Ascending aorta (tissue), 2 donors: ENCODE measurements at regions of chr1 and their contacts with region 1.

Region 1: GRCh38 chr1:150979092-150980056 is 2.7 kb upstream of the ANXA9 start:
- DNase-seq: peak; percentile 42 to 96
- H3K4me3 ChIP-seq: peak overlapping the region in 1 of 2 donors; percentile 50
- H3K27ac ChIP-seq: peak overlapping the region; percentile 95 to 99
- H3K4me1 ChIP-seq: peaks cover 11 to 34% of the 10 kb centered on the region in 2 donors
- H3K27me3 ChIP-seq: no peaks in the 10 kb centered on the region
- CTCF ChIP-seq: peak; percentile 99

Region 2: GRCh38 chr1:150925816-150926741 is 53.3 kb before region 1 on chr1 and contains the start of gene SETDB1:
- intact Hi-C with region 1: loop called (anchors 5 kb)
- DNase-seq: peak; percentile 81 to 98
- H3K4me3 ChIP-seq: peak within 1 kb of the TSS; percentile 73 to 80
- H3K27ac ChIP-seq: peak within 1 kb of the TSS; percentile 71 to 84
- H3K4me1 ChIP-seq: peaks cover 0 to 4% of the 10 kb centered on the region in 2 donors
- H3K27me3 ChIP-seq: no peaks in the 10 kb centered on the region
- CTCF ChIP-seq: no peak
- total RNA-seq, gene SETDB1: 21.3 TPM

Region 3: GRCh38 chr1:150961799-150962198 is 17.6 kb before region 1 on chr1:
- intact Hi-C with region 1: no loop called
- DNase-seq: no peak
- H3K4me3 ChIP-seq: no peak overlapping the region
- H3K27ac ChIP-seq: peak overlapping the region in 1 of 2 donors; percentile 23
- H3K4me1 ChIP-seq: no peaks in the 10 kb centered on the region
- H3K27me3 ChIP-seq: no peaks in the 10 kb centered on the region
- CTCF ChIP-seq: no peak

Region 4: DNA sequence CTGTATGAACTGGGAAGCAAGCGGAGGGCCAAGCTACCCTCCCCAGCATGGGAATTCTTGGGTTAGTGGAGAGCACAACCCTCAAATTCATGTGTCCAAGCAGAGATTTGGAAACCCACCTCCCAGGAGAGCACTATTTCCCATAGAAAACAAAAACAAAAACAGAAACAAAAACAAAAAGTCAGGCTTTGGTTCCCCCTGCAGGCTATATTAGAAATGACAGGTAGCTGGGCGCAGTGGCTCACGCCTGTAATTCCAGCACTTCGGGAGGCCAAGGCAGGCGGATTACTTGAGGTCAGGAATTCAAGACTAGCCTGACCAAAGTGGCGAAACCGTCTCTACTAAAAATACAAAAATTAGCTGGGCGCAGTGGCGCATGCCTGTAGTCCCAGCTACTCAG is 16.5 kb after region 1 on chr1:
- intact Hi-C with region 1: loop called (anchors 2 kb)
- DNase-seq: no peak
- H3K4me3 ChIP-seq: no peak overlapping the region
- H3K27ac ChIP-seq: peak overlapping the region in 1 of 2 donors; percentile 3
- H3K4me1 ChIP-seq: no peaks in the 10 kb centered on the region
- H3K27me3 ChIP-seq: no peaks in the 10 kb centered on the region
- CTCF ChIP-seq: peak; percentile 77 to 81 (median 80)

Region 5: DNA sequence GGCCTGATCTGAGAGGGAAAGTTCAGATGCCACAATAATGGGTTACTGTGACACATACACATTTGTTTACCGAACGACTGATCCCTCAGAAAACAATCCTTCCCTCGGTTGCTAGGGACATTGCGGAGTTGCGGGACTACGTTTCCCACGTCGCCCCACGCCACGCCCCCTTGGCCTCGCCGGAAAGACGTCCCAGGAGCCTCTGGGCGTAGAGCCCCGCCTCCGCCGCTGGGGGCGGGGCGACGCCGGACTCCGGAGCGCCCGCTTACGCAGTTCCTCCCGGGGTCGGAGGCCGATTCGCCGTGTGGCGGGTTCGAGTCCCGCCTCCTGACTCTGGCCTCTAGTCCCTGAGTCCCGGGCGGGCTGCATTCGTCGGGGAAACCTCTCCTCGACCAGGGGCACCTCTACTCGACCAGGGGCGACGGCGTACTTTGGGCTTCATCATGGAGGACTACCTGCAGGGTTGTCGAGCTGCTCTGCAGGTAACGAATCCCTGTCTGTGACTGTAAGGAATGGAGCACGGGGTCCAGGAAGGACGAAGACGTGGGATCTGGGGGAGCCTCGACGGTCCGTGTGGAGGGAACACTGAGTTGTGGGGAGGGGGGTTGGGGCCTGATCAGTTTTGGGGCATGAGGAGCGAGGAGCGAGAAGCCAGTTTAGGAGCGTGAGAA is 29.0 kb after region 1 on chr1 and contains the start of gene PRUNE1:
- intact Hi-C with region 1: loop called (anchors 1 kb)
- DNase-seq: peak; percentile 84 to 97
- H3K4me3 ChIP-seq: peak within 1 kb of the TSS; percentile 70 to 71
- H3K27ac ChIP-seq: peak within 1 kb of the TSS; percentile 85 to 87
- H3K4me1 ChIP-seq: peaks cover 11 to 48% of the 10 kb centered on the region in 2 donors
- H3K27me3 ChIP-seq: no peaks in the 10 kb centered on the region
- CTCF ChIP-seq: no peak
- total RNA-seq, gene PRUNE1: 36.5 TPM

Region 6: DNA sequence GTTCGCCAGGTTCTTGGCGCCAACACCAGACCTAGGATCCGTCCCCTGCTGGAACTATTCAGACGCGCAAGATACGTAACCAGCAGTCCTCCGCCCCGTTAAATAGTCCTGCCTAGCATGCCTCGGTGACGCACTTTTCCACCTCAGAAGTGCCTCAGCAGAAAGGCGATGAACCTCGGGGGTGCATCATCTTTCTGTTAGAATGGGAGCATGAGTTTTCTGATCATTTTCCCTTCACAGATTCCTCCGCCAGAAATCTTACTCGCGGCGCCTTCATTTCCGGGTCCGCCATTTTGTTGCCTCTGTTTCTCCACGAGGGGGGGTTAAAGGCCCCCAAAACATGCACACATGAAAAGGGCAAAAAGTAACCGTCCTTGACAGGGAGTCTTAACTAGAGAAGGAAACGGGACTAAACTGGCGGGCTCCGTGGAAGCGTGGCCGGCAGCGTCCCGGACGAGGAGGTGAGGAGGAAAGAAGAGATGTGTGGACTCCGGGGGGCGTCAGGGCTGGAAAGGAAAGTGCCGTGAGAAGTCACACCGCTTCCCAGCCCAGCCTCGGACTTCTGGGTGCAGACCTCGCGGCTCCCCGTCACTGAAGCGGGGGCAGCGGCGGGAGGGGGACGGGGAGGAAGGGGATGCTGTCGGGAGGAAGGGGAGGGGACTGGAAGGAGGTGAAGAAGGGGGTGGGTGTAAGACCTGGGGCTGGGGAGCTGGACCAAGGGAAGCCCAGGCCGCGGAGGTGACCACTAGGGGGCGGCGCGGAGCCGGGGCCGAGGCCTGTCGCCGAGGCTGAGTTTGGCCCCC is 91.3 kb after region 1 on chr1 and contains the start of gene GABPB2:
- intact Hi-C with region 1: no loop called
- DNase-seq: peak; percentile 80 to 97
- H3K4me3 ChIP-seq: peak within 1 kb of the TSS; percentile 58 to 88
- H3K27ac ChIP-seq: peak within 1 kb of the TSS; percentile 98 to 99
- H3K4me1 ChIP-seq: peaks cover 0 to 5% of the 10 kb centered on the region in 2 donors
- H3K27me3 ChIP-seq: no peaks in the 10 kb centered on the region
- CTCF ChIP-seq: peak; percentile 79 to 91 (median 85)
- total RNA-seq, gene GABPB2: 3.7 TPM